CD4-positive, alpha-beta memory T cell (primary cell): ENCODE measurements at regions of chr12 and their contacts with region 1.

Region 1: GRCh38 chr12:8544295-8544694 is 3.6 kb upstream of the CLEC4E start:
- DNase-seq: peak; percentile 69 to 79 (median 72)
- H3K4me3 ChIP-seq: no peak overlapping the region
- H3K4me3 Mint-ChIP-seq: peak overlapping the region in 7 of 8 donors; percentile 37 to 59 (median 51)
- H3K27ac ChIP-seq: no peak overlapping the region
- H3K27ac Mint-ChIP-seq: no peak overlapping the region
- H3K4me1 ChIP-seq: peaks cover 6% of the 10 kb centered on the region
- H3K4me1 Mint-ChIP-seq: peaks cover 0 to 10% (median 5%) of the 10 kb centered on the region in 4 donors
- H3K27me3 ChIP-seq: no peaks in the 10 kb centered on the region
- H3K27me3 Mint-ChIP-seq: peaks cover 15 to 20% of the 10 kb centered on the region in 2 donors

Region 2: GRCh38 chr12:7959701-7960121 is 584.6 kb before region 1 on chr12:
- CTCF ChIA-PET with region 1: no interaction called
- POLR2A ChIA-PET with region 1: no interaction called
- intact Hi-C with region 1: no loop called
- DNase-seq: peak; percentile 32 to 59 (median 55)
- H3K4me3 ChIP-seq: peak overlapping the region; percentile 30 to 54
- H3K4me3 Mint-ChIP-seq: peak overlapping the region; percentile 81 to 96 (median 92)
- H3K27ac ChIP-seq: peak overlapping the region; percentile 69
- H3K27ac Mint-ChIP-seq: peak overlapping the region; percentile 85 to 99 (median 96)
- H3K4me1 ChIP-seq: peaks cover 39% of the 10 kb centered on the region
- H3K4me1 Mint-ChIP-seq: peaks cover 26 to 44% (median 35%) of the 10 kb centered on the region in 4 donors
- H3K27me3 ChIP-seq: no peaks in the 10 kb centered on the region
- H3K27me3 Mint-ChIP-seq: no peaks in the 10 kb centered on the region

Region 3: GRCh38 chr12:8475508-8476203 is 68.6 kb before region 1 on chr12:
- CTCF ChIA-PET with region 1: no interaction called
- POLR2A ChIA-PET with region 1: no interaction called
- intact Hi-C with region 1: no loop called
- DNase-seq: no peak
- H3K4me3 ChIP-seq: no peak overlapping the region
- H3K4me3 Mint-ChIP-seq: no peak overlapping the region
- H3K27ac ChIP-seq: no peak overlapping the region
- H3K27ac Mint-ChIP-seq: no peak overlapping the region
- H3K4me1 ChIP-seq: no peaks in the 10 kb centered on the region
- H3K4me1 Mint-ChIP-seq: no peaks in the 10 kb centered on the region
- H3K27me3 ChIP-seq: no peaks in the 10 kb centered on the region
- H3K27me3 Mint-ChIP-seq: peaks cover 10 to 17% of the 10 kb centered on the region in 2 donors

Region 4: DNA sequence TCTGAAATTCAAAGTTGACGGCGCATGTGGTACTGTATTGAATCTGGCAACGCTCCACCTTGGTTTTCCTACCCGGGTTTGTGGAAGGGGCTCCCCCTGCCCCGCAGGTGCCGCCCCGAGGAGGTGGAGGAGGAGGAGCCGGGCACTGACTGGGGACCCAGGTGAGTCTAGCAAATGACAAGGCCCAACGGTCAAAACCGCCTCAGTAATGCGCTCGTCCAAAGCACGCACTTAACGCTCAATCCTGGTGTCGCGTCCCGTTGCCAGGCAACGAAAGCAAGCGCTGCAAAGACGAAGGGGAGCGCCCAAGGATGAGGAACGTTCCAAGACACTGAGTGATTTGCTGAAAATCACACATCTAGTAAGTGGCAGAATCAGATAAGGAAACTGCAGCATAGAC is 20.4 kb after region 1 on chr12:
- CTCF ChIA-PET with region 1: interaction called, 24 read pairs
- POLR2A ChIA-PET with region 1: no interaction called
- intact Hi-C with region 1: no loop called
- DNase-seq: no peak
- H3K4me3 ChIP-seq: no peak overlapping the region
- H3K4me3 Mint-ChIP-seq: no peak overlapping the region
- H3K27ac ChIP-seq: no peak overlapping the region
- H3K27ac Mint-ChIP-seq: peak overlapping the region in 1 of 7 donors; percentile 55
- H3K4me1 ChIP-seq: no peaks in the 10 kb centered on the region
- H3K4me1 Mint-ChIP-seq: no peaks in the 10 kb centered on the region
- H3K27me3 ChIP-seq: no peaks in the 10 kb centered on the region
- H3K27me3 Mint-ChIP-seq: peaks cover 3 to 9% of the 10 kb centered on the region in 2 donors

Region 5: DNA sequence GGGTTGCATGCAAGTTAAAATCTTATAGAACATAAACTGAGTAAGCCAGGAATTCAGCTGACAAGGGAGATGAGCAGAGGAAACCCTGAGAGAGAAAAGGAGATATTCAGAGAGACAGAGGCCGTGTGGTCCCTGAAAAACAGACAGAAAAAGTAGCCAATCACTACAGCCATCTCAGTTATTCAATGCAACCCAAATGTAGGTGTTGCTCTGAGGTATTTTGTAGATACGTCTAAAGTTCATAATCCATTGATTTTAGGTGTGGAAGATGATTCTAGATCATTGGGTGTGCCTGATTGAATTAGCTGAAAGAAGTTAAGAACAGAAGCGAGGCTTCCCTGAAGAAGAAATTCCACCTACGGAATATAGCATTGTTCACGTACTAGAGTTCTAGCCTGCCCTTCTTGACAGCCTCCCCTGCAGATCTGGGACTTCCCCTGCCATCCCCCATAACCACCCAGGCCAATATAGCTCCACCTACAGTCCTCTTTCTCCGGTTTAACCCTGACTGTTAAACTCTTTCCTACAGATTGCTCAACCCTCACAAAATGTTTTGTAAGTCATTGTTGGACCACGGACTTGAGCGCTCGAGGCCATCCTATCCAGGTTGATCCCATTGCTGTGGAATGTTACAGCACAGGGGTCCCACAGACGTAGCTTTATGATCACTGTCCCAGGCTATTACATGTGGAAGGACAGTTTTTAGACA is 46.7 kb after region 1 on chr12:
- CTCF ChIA-PET with region 1: interaction called, 26 read pairs
- POLR2A ChIA-PET with region 1: no interaction called
- intact Hi-C with region 1: no loop called
- DNase-seq: peak in 1 of 5 donors; percentile 13
- H3K4me3 ChIP-seq: no peak overlapping the region
- H3K4me3 Mint-ChIP-seq: peak overlapping the region in 1 of 8 donors; percentile 12
- H3K27ac ChIP-seq: no peak overlapping the region
- H3K27ac Mint-ChIP-seq: peak overlapping the region in 1 of 7 donors; percentile 50
- H3K4me1 ChIP-seq: no peaks in the 10 kb centered on the region
- H3K4me1 Mint-ChIP-seq: peaks cover 0 to 10% (median 8%) of the 10 kb centered on the region in 4 donors
- H3K27me3 ChIP-seq: no peaks in the 10 kb centered on the region
- H3K27me3 Mint-ChIP-seq: peaks cover 0 to 2% of the 10 kb centered on the region in 2 donors

Region 6: DNA sequence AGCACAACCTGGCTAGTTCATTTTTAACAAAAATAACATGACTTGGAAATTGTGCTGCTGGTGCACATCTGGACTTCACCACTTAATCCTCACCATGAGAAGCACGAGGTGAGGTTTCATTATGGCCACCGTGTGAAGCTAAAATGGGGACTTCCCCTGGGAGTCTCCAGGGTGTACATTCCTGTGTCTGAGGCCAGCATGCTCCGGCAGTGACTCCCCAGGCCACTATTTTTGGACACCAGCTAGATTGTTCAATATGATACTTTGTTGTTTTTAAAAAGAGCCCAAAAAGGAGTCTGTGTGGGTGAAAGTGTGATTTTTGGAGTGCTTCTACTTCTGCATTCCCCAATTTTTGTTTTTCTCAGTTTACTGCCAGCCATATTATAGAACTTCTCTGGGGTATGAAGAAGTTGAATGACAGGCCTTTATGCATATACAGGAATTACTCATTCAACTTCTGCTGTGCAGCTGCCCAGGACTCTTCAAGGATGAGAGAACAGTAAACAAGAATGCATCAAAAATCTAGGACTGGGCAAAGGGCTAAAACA is 85.3 kb after region 1 on chr12:
- CTCF ChIA-PET with region 1: interaction called, 11 read pairs
- POLR2A ChIA-PET with region 1: no interaction called
- intact Hi-C with region 1: no loop called
- DNase-seq: no peak
- H3K4me3 ChIP-seq: no peak overlapping the region
- H3K4me3 Mint-ChIP-seq: no peak overlapping the region
- H3K27ac ChIP-seq: no peak overlapping the region
- H3K27ac Mint-ChIP-seq: no peak overlapping the region
- H3K4me1 ChIP-seq: no peaks in the 10 kb centered on the region
- H3K4me1 Mint-ChIP-seq: no peaks in the 10 kb centered on the region
- H3K27me3 ChIP-seq: no peaks in the 10 kb centered on the region
- H3K27me3 Mint-ChIP-seq: peaks cover 0 to 2% of the 10 kb centered on the region in 2 donors

Region 7: DNA sequence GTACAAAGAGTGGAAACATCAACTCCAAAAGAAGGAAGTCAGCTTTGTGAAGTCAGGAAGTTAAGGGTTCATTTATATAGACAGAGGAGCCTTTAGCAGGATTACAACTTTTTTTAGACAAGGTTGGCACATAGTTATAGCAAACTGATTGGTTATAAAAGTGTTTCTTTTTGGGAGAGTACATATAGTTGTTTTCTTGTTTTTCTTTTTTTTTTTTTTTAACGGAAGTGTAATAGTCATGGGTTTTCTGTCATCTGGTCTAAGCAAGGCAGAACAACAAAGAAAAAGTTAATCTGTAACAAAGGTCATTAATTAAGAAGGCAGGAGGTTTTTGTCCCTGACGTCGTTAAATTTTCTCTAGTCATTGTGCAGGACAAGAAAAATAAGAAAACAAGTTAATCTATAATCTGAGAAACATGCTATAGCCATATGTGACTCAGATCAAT is 131.3 kb after region 1 on chr12:
- CTCF ChIA-PET with region 1: interaction called, 59 read pairs
- POLR2A ChIA-PET with region 1: no interaction called
- intact Hi-C with region 1: no loop called
- DNase-seq: no peak
- H3K4me3 ChIP-seq: no peak overlapping the region
- H3K4me3 Mint-ChIP-seq: peak overlapping the region in 2 of 8 donors; percentile 3 to 6
- H3K27ac ChIP-seq: no peak overlapping the region
- H3K27ac Mint-ChIP-seq: peak overlapping the region in 5 of 7 donors; percentile 29 to 72 (median 43)
- H3K4me1 ChIP-seq: peaks cover 9% of the 10 kb centered on the region
- H3K4me1 Mint-ChIP-seq: peaks cover 7 to 14% (median 10%) of the 10 kb centered on the region in 4 donors
- H3K27me3 ChIP-seq: no peaks in the 10 kb centered on the region
- H3K27me3 Mint-ChIP-seq: peaks cover 2 to 3% of the 10 kb centered on the region in 2 donors

Region 8: DNA sequence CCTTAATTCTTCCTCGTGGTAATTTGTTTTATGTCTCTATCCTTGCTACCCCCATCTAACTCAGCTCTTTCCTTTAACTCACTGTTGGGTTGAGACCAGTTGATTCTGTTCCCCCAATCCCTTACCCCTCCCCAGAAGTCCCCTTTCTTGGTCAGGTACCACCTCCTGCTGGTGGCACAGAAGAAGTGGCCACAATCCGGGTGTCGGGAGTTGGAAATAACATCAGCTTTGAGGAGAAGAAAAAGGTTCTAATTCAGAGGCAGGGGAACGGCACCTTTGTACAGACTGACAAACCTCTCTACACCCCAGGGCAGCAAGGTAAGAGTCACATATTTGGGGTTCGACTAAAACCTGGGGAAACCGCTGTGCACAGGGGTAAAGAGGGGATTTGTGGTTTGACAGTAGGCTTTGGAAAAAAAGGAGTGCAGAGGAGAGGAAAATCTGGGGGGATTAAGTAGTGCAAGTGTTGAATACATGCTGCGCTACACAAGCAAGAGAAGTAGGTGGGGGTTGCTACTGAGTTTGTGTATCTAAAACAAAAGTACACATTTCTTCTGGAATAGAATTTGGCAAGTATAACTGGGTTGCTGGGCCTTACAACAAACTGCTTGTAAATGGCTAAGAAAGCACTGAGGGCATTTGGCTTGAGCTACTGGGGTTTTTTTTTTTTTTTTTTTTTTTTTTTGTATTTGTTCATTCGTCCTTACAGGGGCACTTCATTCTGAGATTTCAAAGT is 279.4 kb after region 1 on chr12:
- CTCF ChIA-PET with region 1: interaction called, 5 read pairs
- POLR2A ChIA-PET with region 1: no interaction called
- intact Hi-C with region 1: loop called (anchors 1 kb)
- DNase-seq: no peak
- H3K4me3 ChIP-seq: no peak overlapping the region
- H3K4me3 Mint-ChIP-seq: no peak overlapping the region
- H3K27ac ChIP-seq: no peak overlapping the region
- H3K27ac Mint-ChIP-seq: no peak overlapping the region
- H3K4me1 ChIP-seq: no peaks in the 10 kb centered on the region
- H3K4me1 Mint-ChIP-seq: peaks cover 0 to 2% (median 0%) of the 10 kb centered on the region in 4 donors
- H3K27me3 ChIP-seq: no peaks in the 10 kb centered on the region
- H3K27me3 Mint-ChIP-seq: peaks cover 4% of the 10 kb centered on the region in 2 donors

Region 9: GRCh38 chr12:9049520-9050133 is 505.3 kb after region 1 on chr12:
- CTCF ChIA-PET with region 1: interaction called, 42 read pairs
- POLR2A ChIA-PET with region 1: interaction called, 3 read pairs
- intact Hi-C with region 1: loop called (anchors 1 kb)
- DNase-seq: peak; percentile 39 to 66 (median 60)
- H3K4me3 ChIP-seq: no peak overlapping the region
- H3K4me3 Mint-ChIP-seq: peak overlapping the region in 2 of 8 donors; percentile 26 to 55
- H3K27ac ChIP-seq: no peak overlapping the region
- H3K27ac Mint-ChIP-seq: peak overlapping the region; percentile 26 to 90 (median 51)
- H3K4me1 ChIP-seq: peaks cover 25% of the 10 kb centered on the region
- H3K4me1 Mint-ChIP-seq: peaks cover 20 to 46% (median 35%) of the 10 kb centered on the region in 4 donors
- H3K27me3 ChIP-seq: no peaks in the 10 kb centered on the region
- H3K27me3 Mint-ChIP-seq: no peaks in the 10 kb centered on the region